ENCODE measurements at regions of chr1 and their contacts with region 1.

Region 1: DNA sequence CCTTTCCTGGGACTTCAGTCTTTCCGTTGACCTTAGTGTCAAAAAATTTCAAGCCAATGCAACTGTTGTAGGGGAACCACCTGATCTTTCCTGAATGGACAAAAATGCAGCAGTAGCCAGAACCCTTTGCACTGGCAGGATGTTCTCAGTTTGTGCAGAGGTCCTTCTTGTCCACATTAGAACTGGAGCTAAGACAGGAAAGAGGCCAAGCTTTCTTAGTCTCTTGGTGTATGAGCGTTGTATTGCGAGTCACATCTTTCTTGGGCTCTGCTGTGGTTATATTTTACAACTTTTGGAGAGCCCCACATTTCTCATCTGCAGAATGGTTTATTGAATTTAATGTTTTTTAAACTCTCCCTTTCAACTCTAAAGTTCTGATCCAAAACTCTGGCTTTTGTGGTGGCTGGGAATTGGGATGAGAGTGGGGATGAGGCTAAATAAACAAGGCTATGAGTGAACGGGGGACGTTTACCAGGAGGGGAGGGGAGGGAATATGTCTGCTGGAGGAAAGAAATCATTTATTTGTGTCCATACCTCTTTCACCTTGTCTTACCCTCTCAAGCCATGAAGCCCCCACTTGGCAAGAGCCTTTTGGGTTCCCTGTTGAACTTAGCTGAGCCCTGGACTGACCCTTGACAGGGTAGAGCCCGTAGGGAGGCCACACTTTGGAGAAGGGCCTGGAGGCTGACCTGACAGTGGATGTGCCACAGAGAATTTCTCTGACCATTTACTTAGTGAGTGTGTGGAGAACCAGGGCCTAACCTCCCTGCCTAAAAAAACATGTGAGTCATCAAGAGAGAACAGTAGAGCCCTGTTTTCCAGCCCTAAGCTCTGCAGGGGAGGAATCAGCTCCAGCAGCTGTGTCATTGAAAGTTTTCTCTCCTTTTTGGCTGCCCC is 586 bp downstream of the CHI3L2 start:
- DNase-seq: no peak
- ATAC-seq: no peak
- H3K4me3 Mint-ChIP-seq: peak overlapping the region; percentile 12 to 85 (median 70)
- H3K27ac Mint-ChIP-seq: peak overlapping the region; percentile 32 to 98 (median 96)
- H3K4me1 Mint-ChIP-seq: peaks cover 35 to 94% (median 87%) of the 10 kb centered on the region in 4 donors
- H3K27me3 Mint-ChIP-seq: no peaks in the 10 kb centered on the region

Region 2: GRCh38 chr1:111214074-111214801 is 13.9 kb before region 1 on chr1:
- POLR2A ChIA-PET with region 1: interaction called, 45 read pairs
- DNase-seq: no peak
- ATAC-seq: no peak
- H3K4me3 Mint-ChIP-seq: peak overlapping the region; percentile 44 to 95 (median 78)
- H3K27ac Mint-ChIP-seq: peak overlapping the region; percentile 87 to 99 (median 96)
- H3K4me1 Mint-ChIP-seq: peaks cover 55 to 95% (median 89%) of the 10 kb centered on the region in 4 donors
- H3K27me3 Mint-ChIP-seq: peaks cover 0 to 3% (median 0%) of the 10 kb centered on the region in 5 donors

Region 3: GRCh38 chr1:111251570-111251969 is 23.5 kb after region 1 on chr1:
- POLR2A ChIA-PET with region 1: interaction called, 14 read pairs
- DNase-seq: peak in 6 of 10 donors; percentile 10 to 58 (median 32)
- ATAC-seq: peak; percentile 98 to 99
- H3K4me3 Mint-ChIP-seq: peak overlapping the region in 7 of 10 donors; percentile 8 to 65 (median 39)
- H3K27ac Mint-ChIP-seq: peak overlapping the region; percentile 78 to 91 (median 88)
- H3K4me1 Mint-ChIP-seq: peaks cover 22 to 46% (median 34%) of the 10 kb centered on the region in 4 donors
- H3K27me3 Mint-ChIP-seq: no peaks in the 10 kb centered on the region

Measured in naive thymus-derived CD8-positive, alpha-beta T cell (primary cell).